Adrenal gland (tissue), 19 donors: ENCODE measurements at regions of chr11 and their contacts with region 1.

Region 1: GRCh38 chr11:113305440-113306336 is 8.7 kb upstream of the TTC12 start:
- DNase-seq: peak; percentile 77 to 93 (median 83)
- H3K4me3 ChIP-seq: no peak overlapping the region
- H3K27ac ChIP-seq: no peak overlapping the region
- H3K4me1 ChIP-seq: no peaks in the 10 kb centered on the region
- H3K27me3 ChIP-seq: no peaks in the 10 kb centered on the region
- CTCF ChIP-seq: peak; percentile 78 to 97 (median 96)
- POLR2A ChIP-seq: no peak

Region 2: GRCh38 chr11:113213549-113213948 is 92.1 kb before region 1 on chr11:
- intact Hi-C with region 1: no loop called
- DNase-seq: no peak
- H3K4me3 ChIP-seq: no peak overlapping the region
- H3K27ac ChIP-seq: no peak overlapping the region
- H3K4me1 ChIP-seq: peaks cover 5 to 12% of the 10 kb centered on the region in 2 donors
- H3K27me3 ChIP-seq: no peaks in the 10 kb centered on the region
- CTCF ChIP-seq: no peak
- POLR2A ChIP-seq: no peak

Region 3: DNA sequence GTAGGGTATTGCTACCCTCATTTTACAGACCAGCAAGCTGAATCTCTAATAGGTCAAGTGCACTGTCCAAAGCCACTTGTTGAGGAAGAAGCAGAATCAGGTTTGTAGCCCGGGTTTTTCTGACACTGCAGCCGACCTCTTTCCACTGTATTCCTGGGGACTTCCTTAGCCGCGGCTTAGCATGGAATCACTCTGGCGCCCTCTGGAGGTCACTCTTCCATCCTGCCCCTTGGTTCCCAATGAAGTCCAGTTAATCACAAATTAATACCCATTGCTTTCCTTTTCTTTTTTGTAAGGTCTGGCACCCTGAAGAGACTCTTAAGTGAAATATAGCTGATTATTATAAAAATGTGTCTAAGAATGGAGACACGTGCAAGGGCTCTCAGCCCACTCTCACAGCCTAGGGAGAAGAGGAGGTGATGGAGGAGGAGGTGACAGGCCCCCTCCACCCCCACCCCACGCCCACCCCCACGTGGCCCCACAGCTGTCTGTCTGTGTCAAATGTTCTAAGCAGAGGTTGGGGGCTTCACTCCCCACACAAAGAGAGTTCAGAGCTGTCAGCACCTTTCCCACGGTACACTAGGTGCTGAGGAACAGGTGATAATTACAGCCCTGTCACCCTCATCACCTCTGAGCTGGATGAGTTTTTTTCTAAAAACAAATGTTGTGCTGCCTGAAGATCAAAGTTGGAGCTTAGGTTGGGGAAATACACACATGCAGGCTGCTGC is 227.2 kb after region 1 on chr11:
- intact Hi-C with region 1: loop called (anchors 2 to 5 kb)
- DNase-seq: peak; percentile 64 to 93 (median 83)
- H3K4me3 ChIP-seq: no peak overlapping the region
- H3K27ac ChIP-seq: no peak overlapping the region
- H3K4me1 ChIP-seq: no peaks in the 10 kb centered on the region
- H3K27me3 ChIP-seq: no peaks in the 10 kb centered on the region
- CTCF ChIP-seq: peak; percentile 67 to 91 (median 80)
- POLR2A ChIP-seq: no peak